Gastrocnemius medialis (tissue), 4 donors: ENCODE measurements at regions of chr6 and their contacts with region 1.

Region 1: GRCh38 chr6:16338577-16339262 is 100.3 kb downstream of the GMPR start:
- DNase-seq: peak in 1 of 2 donors; percentile 57
- ATAC-seq: peak in 1 of 2 donors; percentile 9
- H3K4me3 ChIP-seq: no peak overlapping the region
- H3K27ac ChIP-seq: no peak overlapping the region
- H3K4me1 ChIP-seq: peaks cover 56 to 61% of the 10 kb centered on the region in 2 donors
- H3K27me3 ChIP-seq: no peaks in the 10 kb centered on the region
- CTCF ChIP-seq: peak in 3 of 5 experiments; percentile 24 to 45 (median 28)
- POLR2A ChIP-seq: no peak

Region 2: GRCh38 chr6:16228709-16229665 is 109.7 kb before region 1 on chr6:
- in situ Hi-C with region 1: no loop called
- intact Hi-C with region 1: no loop called
- DNase-seq: peak; percentile 28 to 48
- ATAC-seq: peak; percentile 73 to 86
- H3K4me3 ChIP-seq: peak overlapping the region in 3 of 4 donors; percentile 26 to 37 (median 30)
- H3K27ac ChIP-seq: peak overlapping the region in 1 of 4 donors; percentile 25
- H3K4me1 ChIP-seq: peaks cover 8 to 14% of the 10 kb centered on the region in 2 donors
- H3K27me3 ChIP-seq: no peaks in the 10 kb centered on the region
- CTCF ChIP-seq: peak in 3 of 5 experiments; percentile 30 to 36 (median 31)
- POLR2A ChIP-seq: no peak

Region 3: DNA sequence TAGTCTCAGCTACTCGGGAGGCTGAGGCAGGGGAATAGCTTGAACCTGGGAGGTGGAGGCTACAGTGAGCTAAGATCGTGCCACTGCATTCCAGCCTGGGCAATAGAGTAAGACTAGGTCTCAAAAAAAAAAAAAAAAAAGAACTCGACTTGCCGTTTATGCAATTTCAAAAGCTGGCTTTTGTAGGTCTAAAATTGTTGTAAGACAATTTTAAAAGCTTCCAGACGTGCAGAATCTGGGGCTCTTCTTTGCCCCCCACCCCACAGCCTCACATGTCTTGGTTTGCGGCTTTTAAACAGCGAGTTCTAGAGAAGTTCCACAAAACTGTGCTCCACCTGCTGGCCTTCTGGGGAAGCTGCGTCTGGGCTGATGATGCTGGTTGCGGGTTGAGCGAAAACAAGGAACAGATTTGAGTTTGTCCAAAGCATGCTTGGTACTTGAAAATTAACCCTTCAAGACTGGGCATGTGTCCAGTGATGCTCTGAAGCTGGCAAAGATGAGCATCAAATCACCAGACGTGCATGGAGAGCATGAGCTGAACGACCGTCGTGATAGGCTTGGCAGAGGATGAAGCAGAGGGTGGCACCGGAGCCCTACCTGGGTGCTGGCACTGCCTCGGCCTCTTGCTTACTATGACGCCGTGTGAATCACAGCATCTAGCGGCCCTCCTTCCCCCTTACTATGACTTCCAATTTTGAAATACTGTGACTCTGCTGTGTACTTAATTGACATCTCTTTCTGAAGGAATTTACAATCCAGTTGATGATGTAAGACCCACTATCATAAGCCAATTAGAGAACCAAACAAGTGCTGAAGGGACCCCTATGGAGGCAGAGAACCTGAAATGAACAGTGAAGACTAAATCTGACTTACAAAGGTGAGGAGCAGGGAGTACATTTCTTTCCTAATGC is 71.1 kb after region 1 on chr6:
- in situ Hi-C with region 1: loop called (anchors 5 to 10 kb)
- intact Hi-C with region 1: no loop called
- DNase-seq: peak; percentile 37 to 53
- ATAC-seq: peak; percentile 78 to 88
- H3K4me3 ChIP-seq: no peak overlapping the region
- H3K27ac ChIP-seq: no peak overlapping the region
- H3K4me1 ChIP-seq: peaks cover 5 to 12% of the 10 kb centered on the region in 2 donors
- H3K27me3 ChIP-seq: no peaks in the 10 kb centered on the region
- CTCF ChIP-seq: peak; percentile 71 to 82 (median 77)
- POLR2A ChIP-seq: no peak

Region 4: DNA sequence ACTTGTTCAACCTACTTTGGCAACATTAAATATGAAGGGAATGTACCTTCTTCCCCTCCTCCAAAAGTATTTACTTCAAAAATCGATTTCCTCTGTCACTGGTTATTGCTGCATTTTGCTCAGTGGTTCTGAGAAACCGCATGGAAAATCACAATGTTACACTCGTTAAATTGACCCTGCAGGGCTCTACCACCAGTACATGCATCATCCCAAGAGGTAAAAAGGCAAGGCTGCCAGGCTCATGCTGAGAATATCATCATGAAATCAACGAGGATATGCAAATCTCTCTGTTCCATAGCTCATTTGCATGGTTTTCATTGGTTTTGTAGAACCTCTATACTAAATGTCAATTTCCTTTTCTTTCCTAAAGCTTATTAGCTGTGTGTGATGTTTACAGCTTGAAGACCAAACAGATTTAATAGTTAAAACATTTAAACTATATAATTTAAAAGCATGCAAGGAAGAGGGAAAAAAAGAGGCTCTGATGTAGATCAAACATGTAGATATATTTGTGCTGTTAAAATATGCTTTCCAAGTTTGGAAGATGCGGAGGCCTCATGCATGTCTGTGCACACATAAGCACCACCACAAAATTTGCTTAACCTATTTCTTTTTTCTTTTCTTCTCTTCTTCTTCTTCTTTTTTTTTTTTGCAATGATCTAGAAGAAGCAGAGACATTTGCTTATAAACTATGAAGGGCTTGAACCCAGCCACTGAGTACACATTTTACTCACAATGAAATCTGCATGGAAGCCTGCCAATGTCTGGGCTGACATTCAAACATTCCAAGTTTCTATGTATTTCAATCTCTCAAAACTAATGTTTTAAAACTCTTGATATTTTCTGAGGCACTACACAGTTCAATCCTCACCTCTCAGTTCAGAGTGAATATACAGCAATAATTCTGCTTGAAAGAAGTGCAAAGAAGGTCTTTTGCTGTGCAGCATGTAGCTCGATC is 93.6 kb after region 1 on chr6:
- in situ Hi-C with region 1: no loop called
- intact Hi-C with region 1: no loop called
- DNase-seq: no peak
- ATAC-seq: no peak
- H3K4me3 ChIP-seq: no peak overlapping the region
- H3K27ac ChIP-seq: no peak overlapping the region
- H3K4me1 ChIP-seq: peaks cover 10 to 11% of the 10 kb centered on the region in 2 donors
- H3K27me3 ChIP-seq: no peaks in the 10 kb centered on the region
- CTCF ChIP-seq: no peak
- POLR2A ChIP-seq: no peak

Region 5: DNA sequence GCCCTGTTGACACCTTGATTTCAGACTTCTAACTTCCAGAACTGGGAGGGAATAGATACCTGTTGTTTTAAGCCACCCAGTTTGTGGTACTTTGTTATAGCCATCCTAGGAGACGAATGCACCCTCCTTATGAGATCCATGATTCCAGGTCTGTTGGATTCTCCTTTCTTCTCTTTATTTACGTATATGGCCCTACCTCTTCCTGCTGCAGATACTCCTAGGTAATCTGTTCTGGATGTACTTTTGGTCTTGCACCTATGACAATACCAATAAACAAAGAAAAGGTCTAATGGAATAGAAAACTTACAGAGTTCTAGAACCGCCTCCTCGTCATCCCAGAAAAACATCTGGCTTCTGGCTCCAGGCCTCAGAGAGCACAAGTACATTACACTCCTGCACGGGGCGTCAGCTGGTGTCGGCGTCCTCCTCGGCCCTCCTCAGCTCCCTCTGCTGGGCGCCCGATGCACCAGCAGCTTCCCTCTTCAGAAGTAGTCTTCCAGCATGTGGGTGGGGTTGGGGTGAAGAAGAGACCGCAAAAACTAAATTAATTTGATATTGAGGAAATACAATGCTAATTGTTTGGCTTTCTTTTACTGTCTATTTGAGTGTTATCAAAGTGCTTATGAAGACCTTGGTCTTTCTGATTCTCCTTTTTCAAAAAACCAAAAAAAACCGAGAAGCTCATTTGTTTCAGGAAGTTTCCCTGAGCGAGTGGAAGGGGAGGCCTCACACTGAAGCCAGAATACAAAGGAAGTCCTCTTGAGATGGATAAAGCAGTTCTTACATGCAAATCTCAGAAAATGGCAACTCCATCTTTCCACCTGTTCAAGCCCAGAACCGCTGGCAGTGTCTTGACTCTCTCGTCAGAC is 432.2 kb after region 1 on chr6:
- in situ Hi-C with region 1: loop called (anchors 5 to 10 kb)
- intact Hi-C with region 1: no loop called
- DNase-seq: peak; percentile 79 to 81
- ATAC-seq: peak; percentile 60 to 69
- H3K4me3 ChIP-seq: no peak overlapping the region
- H3K27ac ChIP-seq: peak overlapping the region; percentile 40 to 47 (median 44)
- H3K4me1 ChIP-seq: peaks cover 27 to 28% of the 10 kb centered on the region in 2 donors
- H3K27me3 ChIP-seq: no peaks in the 10 kb centered on the region
- CTCF ChIP-seq: peak; percentile 91 to 96 (median 94)
- POLR2A ChIP-seq: no peak